Calu3 (cell line): ENCODE measurements at regions of chr12 and their contacts with region 1.

Region 1: GRCh38 chr12:5022465-5023061 is 21.1 kb upstream of the KCNA5 start:
- DNase-seq: peak; percentile 36
- H3K4me3 Mint-ChIP-seq: no peak overlapping the region
- H3K27ac Mint-ChIP-seq: no peak overlapping the region
- H3K4me1 Mint-ChIP-seq: no peaks in the 10 kb centered on the region
- H3K27me3 Mint-ChIP-seq: peaks cover 81% of the 10 kb centered on the region
- CTCF ChIP-seq: peak; percentile 75

Region 2: DNA sequence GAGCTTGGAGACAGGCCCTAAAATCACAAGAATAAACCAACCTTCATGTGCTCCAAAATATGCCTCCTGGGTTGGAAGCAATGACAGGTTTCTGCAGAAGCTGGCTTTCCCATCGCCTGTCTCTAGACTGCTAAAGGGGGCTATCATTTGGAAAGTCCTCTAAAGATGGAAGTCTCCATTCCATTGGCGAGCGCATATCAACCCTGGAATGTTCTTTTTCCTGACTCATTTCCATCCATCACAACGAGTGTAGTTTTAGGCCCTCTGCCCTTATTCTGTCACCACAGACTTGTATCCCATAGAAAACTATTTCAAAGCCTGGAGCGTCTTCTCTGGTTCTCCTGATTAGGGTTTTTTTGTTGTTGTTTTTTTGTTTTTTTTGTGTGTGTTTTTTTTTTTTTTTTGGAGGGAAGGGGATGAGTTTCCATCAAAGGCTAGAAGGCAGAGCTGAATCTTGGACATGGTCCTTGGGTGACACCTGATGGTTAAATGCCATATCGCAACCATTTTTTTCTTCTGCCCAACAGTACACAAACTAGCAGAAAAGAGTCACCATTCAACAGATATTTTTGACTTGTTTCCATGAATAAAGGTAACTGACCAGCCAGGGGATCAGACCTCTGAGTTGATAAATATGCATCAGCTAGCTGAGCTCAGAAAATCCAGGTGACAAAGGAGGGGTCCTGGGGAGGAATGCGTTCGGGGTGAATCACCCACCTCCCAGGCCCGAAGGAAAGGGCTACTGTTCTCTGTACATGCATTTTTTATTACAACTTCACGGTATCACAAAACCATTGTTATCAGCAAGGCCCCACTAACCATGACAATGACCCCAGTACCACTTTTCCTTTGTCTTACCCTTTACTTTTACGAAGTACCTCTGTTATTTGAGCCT is 61.6 kb after region 1 on chr12:
- CTCF ChIA-PET with region 1: no interaction called
- intact Hi-C with region 1: loop called (anchors 1 kb)
- DNase-seq: peak; percentile 47
- H3K4me3 Mint-ChIP-seq: no peak overlapping the region
- H3K27ac Mint-ChIP-seq: no peak overlapping the region
- H3K4me1 Mint-ChIP-seq: no peaks in the 10 kb centered on the region
- H3K27me3 Mint-ChIP-seq: peaks cover 74% of the 10 kb centered on the region
- CTCF ChIP-seq: peak; percentile 42

Region 3: DNA sequence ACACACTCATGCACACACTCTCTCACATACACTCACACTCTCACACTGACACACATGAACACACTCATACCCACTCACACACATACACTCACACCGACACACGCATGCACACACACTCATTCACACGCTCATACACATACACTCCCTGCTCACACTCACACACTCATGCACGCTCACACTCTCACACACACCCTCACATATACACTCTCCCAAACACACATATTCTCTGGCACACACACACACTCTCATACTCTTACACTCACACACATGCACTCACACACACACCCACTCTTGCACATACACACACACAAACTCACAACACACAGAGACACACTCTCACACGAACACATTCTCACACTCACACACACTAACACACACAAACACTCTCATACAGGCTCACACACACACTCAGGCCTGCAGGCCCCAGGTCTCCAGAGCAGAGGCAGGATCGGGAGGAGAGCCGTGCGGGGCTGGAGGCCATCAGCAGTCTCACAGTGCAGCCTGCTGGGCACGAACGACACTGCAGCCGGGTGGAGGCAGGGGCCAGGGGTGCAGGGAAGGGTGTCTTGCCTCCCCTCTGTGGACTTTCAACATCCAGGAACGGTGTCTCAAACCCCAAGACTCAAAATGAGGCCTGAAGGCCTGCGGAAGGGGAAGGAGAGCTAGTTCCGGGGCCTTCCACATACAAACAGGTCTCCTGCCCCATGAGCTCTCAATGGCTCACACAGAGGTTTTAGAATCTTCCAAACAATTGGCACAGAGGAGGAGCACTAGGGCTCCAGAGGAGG is 773.8 kb after region 1 on chr12:
- CTCF ChIA-PET with region 1: no interaction called
- intact Hi-C with region 1: loop called (anchors 10 kb)
- DNase-seq: peak; percentile 44
- H3K4me3 Mint-ChIP-seq: no peak overlapping the region
- H3K27ac Mint-ChIP-seq: no peak overlapping the region
- H3K4me1 Mint-ChIP-seq: no peaks in the 10 kb centered on the region
- H3K27me3 Mint-ChIP-seq: peaks cover 30% of the 10 kb centered on the region
- CTCF ChIP-seq: no peak